HEK293T (cell line): ENCODE measurements at regions of chrX and their contacts with region 1.

Region 1: GRCh38 chrX:101097546-101098453 is at the start of gene CENPI:
- DNase-seq: peak; percentile 99

Region 2: DNA sequence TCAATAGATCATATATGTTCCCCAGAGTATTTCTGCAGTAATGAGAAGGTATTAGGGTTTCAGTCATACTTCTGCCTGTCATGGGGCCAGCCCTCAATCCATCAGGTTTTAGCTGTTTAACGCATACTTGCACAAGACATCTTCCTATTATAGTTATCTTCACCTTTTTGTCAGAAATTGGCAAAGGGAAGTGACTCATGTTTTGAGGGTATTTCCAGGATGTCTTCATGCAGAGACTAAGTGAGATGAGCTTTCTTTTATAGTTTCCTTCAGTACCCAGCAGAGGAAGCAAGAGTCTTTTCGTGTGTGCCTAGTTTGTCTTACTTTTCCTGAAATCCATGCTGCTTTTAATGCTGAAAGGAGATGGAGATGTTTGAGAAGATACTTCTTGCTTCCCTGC is 268.1 kb before region 1 on chrX:
- CTCF ChIA-PET with region 1: no interaction called
- POLR2A ChIA-PET with region 1: no interaction called
- DNase-seq: no peak

Region 3: DNA sequence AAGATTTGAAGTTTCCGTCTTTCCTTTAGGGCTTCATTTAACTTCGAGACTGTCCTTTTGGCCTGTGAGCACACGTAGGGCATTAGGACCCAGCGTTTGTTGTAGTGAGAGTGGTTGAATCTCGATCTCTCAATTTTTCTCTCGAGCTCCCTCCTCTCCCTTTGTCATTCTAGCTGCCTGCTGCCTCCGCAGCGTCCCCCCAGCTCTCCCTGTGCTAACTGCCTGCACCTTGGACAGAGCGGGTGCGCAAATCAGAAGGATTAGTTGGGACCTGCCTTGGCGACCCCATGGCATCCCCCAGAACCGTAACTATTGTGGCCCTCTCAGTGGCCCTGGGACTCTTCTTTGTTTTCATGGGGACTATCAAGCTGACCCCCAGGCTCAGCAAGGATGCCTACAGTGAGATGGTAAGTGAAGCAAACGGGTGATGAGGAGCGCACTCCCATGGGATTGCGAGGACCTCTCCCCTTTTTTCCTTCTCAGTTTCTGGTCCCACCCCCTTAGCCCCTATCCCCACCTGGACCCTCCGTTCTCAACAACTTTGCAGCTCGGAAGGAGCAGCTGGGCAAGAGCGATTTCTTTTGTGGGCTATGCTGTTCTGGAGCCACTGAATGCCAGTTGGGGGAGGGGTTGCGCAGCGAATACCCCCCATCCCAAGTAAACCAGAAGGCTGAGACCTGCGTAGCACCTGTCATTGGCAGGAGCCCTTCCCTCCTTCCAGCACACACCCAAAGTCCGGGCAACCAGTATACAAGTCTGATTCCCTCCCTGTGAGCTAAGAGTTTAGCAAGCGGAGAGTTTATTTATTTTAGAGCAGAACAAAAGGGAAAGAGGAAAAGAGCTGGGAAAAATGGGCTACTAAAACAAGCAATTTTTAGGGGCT is 18.8 kb before region 1 on chrX and contains the start of gene TMEM35A:
- CTCF ChIA-PET with region 1: no interaction called
- POLR2A ChIA-PET with region 1: interaction called, 15 read pairs
- DNase-seq: no peak

Region 4: GRCh38 chrX:101219864-101220346 is 122.1 kb after region 1 on chrX:
- CTCF ChIA-PET with region 1: no interaction called
- POLR2A ChIA-PET with region 1: no interaction called
- DNase-seq: no peak

Region 5: GRCh38 chrX:101485199-101485949 is 387.6 kb after region 1 on chrX and contains the start of gene ARMCX4:
- CTCF ChIA-PET with region 1: no interaction called
- POLR2A ChIA-PET with region 1: no interaction called
- DNase-seq: no peak